ENCODE measurements at regions of chr1 and their contacts with region 1.

Region 1: DNA sequence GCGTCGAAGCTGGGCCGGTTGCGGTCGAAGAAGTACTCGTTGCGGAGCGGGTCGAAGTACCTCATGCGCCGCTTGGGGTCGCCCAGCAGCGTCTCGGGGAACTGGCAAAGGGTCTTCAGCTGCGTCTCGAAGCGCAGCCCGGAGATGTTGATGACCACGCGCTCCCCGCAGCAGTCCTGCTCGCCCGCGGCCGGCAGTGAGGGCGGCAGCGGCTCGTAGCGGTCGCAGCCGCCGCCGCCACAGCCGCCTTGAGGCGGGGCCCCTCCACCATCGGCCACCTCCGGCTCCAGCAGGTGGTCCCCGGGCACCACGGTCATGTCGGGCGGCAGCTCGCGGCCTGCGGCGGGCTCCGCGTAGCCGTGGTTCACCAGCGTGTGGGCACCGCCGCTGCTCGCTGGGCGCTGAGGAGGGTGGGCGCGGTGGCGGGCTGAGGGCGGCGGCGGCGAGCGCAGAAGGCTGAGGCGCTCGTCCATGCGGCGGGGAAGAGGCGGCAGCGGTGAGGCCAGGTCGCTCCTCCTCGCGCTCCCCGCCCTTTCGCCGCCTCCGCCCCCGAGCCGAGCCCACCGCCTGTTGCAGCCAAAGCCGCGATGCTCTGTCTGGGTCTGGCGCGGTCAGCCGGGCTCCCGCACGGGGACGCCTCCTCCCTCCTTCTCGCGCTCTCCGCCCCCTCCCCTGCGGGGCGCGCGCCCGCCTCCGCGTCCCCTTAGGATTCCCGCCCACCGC is at the start of gene KCNA3:
- DNase-seq: peak in 1 of 2 donors; percentile 49
- H3K4me3 ChIP-seq: peak within 1 kb of the TSS; percentile 50 to 69 (median 58)
- H3K27ac ChIP-seq: peak within 1 kb of the TSS; percentile 13 to 59
- H3K4me1 ChIP-seq: no peaks in the 10 kb centered on the region
- H3K27me3 ChIP-seq: peaks cover 6 to 52% of the 10 kb centered on the region in 2 donors
- CTCF ChIP-seq: no peak
- POLR2A ChIP-seq: no peak
- total RNA-seq, gene KCNA3: 0.96 to 3.9 (median 2.2) TPM

Region 2: DNA sequence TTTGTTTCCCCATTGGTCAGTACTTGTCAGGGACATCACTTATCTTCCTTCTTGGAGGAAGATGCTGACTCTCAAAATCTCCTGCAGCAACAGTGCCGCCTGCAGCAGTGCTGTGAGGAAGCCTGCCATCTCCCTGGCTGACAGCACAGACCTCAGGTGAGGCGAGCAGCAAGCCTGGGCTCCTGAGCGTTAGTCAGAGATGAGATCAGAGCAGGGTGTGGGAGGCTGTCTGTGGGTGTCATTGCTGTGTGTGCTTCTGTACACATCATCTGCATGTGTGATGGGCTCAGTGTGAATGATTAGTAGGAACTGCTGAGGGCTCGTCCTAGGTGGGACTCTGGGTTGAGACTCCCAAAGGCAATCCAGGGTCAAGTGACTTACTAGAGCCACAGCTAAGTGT is 634.0 kb before region 1 on chr1:
- intact Hi-C with region 1: loop called (anchors 5 kb)
- DNase-seq: no peak
- H3K4me3 ChIP-seq: no peak overlapping the region
- H3K27ac ChIP-seq: no peak overlapping the region
- H3K4me1 ChIP-seq: no peaks in the 10 kb centered on the region
- H3K27me3 ChIP-seq: no peaks in the 10 kb centered on the region
- CTCF ChIP-seq: no peak
- POLR2A ChIP-seq: no peak

Measured in breast epithelium (tissue), 4 donors.